ENCODE measurements at regions of chr14 and their contacts with region 1.

Region 1: GRCh38 chr14:92106143-92106926 is at the start of gene ATXN3:
- DNase-seq: peak; percentile 96
- H3K4me3 ChIP-seq: peak within 1 kb of the TSS; percentile 66 to 71 (median 70)
- H3K27ac ChIP-seq: peak within 1 kb of the TSS; percentile 90
- H3K4me1 ChIP-seq: peaks cover 5% of the 10 kb centered on the region
- H3K27me3 ChIP-seq: no peaks in the 10 kb centered on the region
- CTCF ChIP-seq: peak; percentile 76 to 85
- total RNA-seq, gene ATXN3: 21.8 to 25.5 TPM

Region 2: GRCh38 chr14:92039719-92040430 is 66.5 kb before region 1 on chr14 and contains the start of gene TRIP11:
- CTCF ChIA-PET with region 1: interaction called, 5 read pairs
- dilution Hi-C with region 1: no loop called
- in situ Hi-C with region 1: no loop called
- intact Hi-C with region 1: loop called (anchors 1 kb)
- DNase-seq: peak; percentile 90
- H3K4me3 ChIP-seq: peak within 1 kb of the TSS; percentile 72 to 80 (median 75)
- H3K27ac ChIP-seq: peak within 1 kb of the TSS; percentile 93
- H3K4me1 ChIP-seq: peaks cover 10% of the 10 kb centered on the region
- H3K27me3 ChIP-seq: no peaks in the 10 kb centered on the region
- CTCF ChIP-seq: no peak
- total RNA-seq, gene TRIP11: 38.8 to 46.9 TPM

Region 3: DNA sequence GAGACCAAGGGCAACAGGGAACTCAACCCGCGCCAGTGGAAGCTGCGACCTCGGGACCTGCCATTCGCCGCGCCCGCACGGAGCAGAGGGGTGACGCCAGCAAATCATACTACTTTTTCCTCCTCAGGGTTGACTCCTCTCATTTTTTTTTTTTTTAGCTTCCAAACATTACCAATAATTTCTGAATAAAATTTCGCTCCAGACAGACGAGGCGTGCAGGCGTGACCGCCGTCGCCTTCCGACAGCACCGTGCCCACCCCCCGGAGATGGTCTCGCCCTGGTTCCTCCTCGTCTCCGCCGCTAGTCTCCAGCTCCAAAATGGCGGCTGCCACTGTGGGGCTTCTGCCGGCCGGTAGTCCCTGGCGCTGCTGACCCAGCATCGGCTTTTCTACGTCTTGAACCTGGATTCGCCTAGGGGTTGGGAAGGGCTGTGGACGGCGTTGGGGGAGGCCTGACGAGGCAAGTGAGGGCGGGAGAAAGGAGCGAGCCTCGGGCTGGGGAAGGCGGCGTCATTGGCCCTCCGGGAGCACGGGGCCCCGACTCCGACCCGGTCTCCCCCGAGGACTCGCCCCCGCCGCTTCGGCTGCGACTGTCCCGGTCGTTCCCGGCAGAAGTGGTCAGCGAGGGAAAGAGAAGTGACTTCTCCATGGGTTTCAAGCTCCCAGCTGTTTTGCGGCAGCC is 15.5 kb after region 1 on chr14 and contains the starts of genes CPSF2 and NDUFB1:
- CTCF ChIA-PET with region 1: interaction called, 12 read pairs
- dilution Hi-C with region 1: no loop called
- in situ Hi-C with region 1: no loop called
- intact Hi-C with region 1: loop called (anchors 1 kb)
- DNase-seq: peak; percentile 80
- H3K4me3 ChIP-seq: peak within 1 kb of the TSS; percentile 84 to 99 (median 99)
- H3K27ac ChIP-seq: peak within 1 kb of the TSS; percentile 90
- H3K4me1 ChIP-seq: no peaks in the 10 kb centered on the region
- H3K27me3 ChIP-seq: no peaks in the 10 kb centered on the region
- CTCF ChIP-seq: no peak
- total RNA-seq, gene CPSF2: 33.7 to 85.5 TPM
- total RNA-seq, gene NDUFB1: 79.9 to 110 TPM

Region 4: DNA sequence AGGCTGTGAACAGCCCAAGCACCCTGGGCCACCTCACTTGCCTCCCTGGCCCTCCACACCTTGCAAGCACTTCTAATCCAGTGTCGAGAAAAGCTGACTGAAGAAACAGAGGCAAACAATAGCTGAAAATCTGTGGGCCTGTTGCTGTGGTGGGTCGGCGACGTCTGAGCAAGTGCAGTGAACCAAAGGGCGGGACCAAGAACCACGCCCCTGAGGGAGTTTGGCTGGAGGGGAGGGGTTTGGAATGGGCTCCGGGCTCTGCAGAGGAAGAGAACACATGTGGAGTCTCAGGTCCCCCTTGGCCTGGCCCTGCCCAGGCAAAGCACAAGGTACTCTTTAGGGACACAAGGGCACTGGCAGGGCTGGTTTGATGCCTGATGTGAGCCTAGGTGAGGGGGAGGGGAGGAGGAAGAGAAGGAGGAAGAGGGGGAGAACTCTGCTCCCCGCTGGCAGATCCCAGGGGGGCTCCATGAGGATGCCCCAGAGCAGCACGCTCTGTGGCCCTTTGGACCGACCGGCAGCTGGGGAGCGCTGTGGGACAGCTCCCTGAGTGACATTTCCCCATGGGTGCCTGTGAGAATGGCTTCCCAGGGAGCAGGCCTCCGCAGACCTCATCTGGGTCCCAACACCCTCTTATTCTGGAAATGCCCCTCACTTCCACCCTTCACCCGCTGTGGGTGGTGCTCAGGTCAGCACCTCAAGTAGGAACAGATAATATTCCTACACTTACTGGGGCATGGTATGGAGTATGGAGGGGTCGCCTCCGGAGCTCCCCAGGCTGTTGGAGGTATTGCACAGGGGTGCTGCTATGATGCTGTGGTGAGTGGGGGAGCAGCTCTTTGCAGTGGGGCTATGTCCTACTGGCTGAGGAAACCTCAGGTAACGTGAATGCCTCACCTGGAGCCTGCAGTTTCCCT is 100.9 kb after region 1 on chr14:
- CTCF ChIA-PET with region 1: no interaction called
- dilution Hi-C with region 1: no loop called
- in situ Hi-C with region 1: no loop called
- intact Hi-C with region 1: no loop called
- DNase-seq: no peak
- H3K4me3 ChIP-seq: no peak overlapping the region
- H3K27ac ChIP-seq: no peak overlapping the region
- H3K4me1 ChIP-seq: no peaks in the 10 kb centered on the region
- H3K27me3 ChIP-seq: no peaks in the 10 kb centered on the region
- CTCF ChIP-seq: no peak

Region 5: DNA sequence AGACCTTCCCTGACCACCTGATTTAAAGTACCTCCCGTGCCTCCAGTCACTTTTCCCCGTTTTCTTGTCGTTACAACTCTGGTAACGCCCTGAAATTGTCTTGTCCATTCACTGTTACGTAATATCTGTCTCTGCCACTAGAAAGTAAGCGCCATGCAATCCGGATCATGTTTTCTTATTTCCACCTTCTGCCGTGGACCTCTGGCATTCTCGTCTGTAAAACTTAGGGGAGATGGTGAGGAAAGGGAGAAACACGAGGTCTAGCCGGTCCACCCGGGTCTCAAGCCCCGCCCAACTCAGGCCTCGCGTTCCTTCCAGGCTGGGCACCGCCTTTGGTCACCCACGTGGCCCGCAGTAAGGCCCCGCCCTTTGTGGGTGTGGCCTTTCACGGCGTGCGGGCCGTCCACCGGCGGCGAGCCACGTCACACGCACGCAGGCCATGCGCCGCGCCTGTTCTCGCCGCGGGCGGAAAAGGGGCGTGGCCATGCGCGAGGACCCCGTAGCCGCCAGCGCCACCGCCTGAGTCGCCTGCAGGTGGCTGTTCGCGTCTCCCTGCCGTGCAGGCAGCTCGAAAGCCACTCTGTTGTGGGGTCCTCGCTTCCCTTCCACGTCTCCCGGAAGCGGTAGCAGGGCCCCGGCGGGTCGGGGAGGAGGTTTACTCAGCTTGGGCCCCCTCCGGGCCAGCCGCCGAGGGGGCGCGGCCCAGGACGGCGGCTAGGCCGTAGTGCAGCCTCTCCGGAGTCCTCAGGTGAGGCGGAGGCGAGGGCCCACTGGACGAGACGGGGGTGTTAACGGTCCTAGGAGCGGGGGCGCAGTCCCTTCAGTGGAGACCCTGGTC is 687.6 kb after region 1 on chr14 and contains the start of gene GOLGA5:
- CTCF ChIA-PET with region 1: no interaction called
- dilution Hi-C with region 1: no loop called
- in situ Hi-C with region 1: loop called in 1 of 2 experiments (anchors 25 kb)
- intact Hi-C with region 1: no loop called
- DNase-seq: peak; percentile 97
- H3K4me3 ChIP-seq: peak within 1 kb of the TSS; percentile 65 to 100 (median 99)
- H3K27ac ChIP-seq: peak within 1 kb of the TSS; percentile 91
- H3K4me1 ChIP-seq: peaks cover 9% of the 10 kb centered on the region
- H3K27me3 ChIP-seq: no peaks in the 10 kb centered on the region
- CTCF ChIP-seq: no peak
- total RNA-seq, gene GOLGA5: 38.1 to 48.5 TPM